ENCODE measurements at regions of chr12 and their contacts with region 1.

Region 1: GRCh38 chr12:68686595-68687521 is at the start of gene NUP107:
- DNase-seq: peak; percentile 99
- ATAC-seq: peak; percentile 99
- total RNA-seq, gene NUP107: 19.1 TPM

Region 2: GRCh38 chr12:68610370-68611093 is 76.3 kb before region 1 on chr12 and contains the start of gene RAP1B:
- intact Hi-C with region 1: loop called (anchors 2 kb)
- DNase-seq: peak; percentile 95
- ATAC-seq: peak; percentile 97
- total RNA-seq, gene RAP1B: 51.8 TPM

Region 3: DNA sequence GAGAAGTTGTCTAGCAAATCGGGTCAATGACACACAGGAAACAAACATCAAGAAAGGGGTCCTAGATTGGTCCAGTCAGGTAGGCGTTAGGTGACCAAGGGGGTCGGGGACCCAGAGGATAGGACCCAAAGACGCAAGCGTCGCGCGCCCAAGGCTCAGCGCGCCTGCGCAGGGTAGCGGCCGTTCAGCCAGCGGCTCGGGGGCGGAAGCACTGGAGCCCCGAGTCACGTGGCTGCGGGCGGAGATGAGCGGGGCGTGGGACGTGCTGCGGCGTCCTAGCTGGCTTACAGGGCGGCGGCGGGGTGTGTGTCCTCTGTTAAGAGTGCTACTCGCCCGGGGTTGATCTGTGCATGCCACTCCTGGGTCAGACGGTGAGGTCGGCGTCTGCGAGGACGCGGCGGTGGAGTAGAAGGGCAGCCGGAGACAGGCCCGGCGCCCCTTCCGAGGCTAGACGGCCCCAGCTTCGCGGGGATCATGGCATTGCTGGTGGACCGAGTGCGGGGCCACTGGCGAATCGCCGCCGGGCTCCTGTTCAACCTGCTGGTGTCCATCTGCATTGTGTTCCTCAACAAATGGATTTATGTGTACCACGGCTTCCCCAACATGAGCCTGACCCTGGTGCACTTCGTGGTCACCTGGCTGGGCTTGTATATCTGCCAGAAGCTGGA is 59.2 kb after region 1 on chr12 and contains the start of gene SLC35E3:
- intact Hi-C with region 1: loop called (anchors 2 kb)
- DNase-seq: peak; percentile 98
- ATAC-seq: peak; percentile 100
- total RNA-seq, gene SLC35E3: 4.2 TPM